BJ (cell line): ENCODE measurements at regions of chr10 and their contacts with region 1.

Region 1: GRCh38 chr10:68826764-68827591 is at the start of gene STOX1:
- DNase-seq: peak; percentile 0
- H3K4me3 ChIP-seq: peak within 1 kb of the TSS; percentile 49
- H3K27me3 ChIP-seq: peaks cover 6% of the 10 kb centered on the region
- CTCF ChIP-seq: no peak; the same call in 1 of the 2 replicates
- polyA plus RNA-seq, gene STOX1: 0.02 TPM in 1 of 2 replicates, not detected in the other

Region 2: DNA sequence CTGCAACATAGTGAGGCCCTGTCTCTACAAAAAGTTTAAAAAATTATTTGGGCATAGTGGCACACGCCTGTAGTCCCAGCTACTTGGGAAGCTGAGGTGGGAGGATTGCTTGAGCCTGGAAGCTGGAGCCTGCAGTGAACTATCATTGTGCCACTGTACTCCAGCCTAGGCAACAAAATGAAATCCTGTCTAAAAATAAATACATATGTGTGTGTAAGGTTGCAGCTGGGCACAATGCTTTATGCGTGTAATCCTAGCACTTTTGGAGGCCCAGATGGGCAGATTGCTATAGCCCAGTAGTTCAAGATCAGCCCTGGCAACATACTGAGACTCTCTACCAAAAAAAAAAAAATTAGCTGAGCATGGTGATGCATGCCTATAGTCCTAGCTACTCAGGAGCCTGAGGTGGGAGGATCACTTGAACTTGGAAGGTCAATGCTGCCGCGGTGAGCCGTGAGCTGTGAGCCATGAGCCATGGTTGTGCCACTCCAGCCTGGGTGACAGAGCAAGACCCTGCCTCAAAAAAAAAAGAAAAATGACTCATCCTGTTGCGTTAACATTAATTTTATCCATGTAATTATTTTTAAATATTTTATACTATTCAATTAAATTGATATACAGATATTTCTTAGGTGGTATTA is 67.6 kb before region 1 on chr10:
- CTCF ChIA-PET with region 1: no interaction called
- POLR2A ChIA-PET with region 1: no interaction called
- DNase-seq: no peak
- H3K4me3 ChIP-seq: no peak overlapping the region
- H3K27me3 ChIP-seq: no peaks in the 10 kb centered on the region
- CTCF ChIP-seq: no peak

Region 3: DNA sequence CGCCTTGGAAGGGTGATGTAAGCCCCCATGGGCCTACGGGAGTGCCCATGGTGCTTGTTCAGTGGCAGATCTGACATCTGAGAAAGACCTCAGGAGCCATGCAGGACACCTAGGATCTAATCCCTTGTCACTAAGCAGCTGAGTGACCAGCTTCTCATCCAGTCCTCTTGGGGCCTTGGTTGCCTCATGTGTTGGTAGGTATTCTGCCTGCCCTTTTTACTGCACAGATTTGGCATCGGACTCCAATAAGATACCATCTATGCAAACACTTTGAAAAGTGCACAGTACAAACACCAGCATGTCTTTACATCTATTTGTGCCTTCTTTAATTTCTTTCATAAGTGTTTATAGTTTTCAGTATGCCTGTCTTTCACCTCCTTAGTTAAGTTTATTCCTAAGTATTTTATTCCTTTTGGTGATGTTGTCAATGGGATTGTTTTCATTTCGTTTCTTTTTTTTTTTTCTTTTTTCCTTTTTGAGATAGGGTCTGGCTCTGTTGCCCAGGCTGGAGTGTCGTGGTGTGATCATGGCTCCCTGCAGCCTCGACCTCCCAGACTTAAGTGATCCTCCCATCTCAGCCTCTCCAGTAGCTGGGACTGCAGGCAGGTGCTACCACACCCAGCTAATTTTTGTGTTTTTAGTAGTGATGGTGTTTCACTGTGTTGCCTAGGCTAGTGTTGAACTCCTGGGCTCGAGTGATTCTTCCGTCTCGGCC is 10.8 kb after region 1 on chr10:
- CTCF ChIA-PET with region 1: interaction called, 10 read pairs
- POLR2A ChIA-PET with region 1: no interaction called
- DNase-seq: no peak
- H3K4me3 ChIP-seq: no peak overlapping the region
- H3K27me3 ChIP-seq: no peaks in the 10 kb centered on the region; the same call in 1 of the 2 replicates
- CTCF ChIP-seq: no peak

Region 4: DNA sequence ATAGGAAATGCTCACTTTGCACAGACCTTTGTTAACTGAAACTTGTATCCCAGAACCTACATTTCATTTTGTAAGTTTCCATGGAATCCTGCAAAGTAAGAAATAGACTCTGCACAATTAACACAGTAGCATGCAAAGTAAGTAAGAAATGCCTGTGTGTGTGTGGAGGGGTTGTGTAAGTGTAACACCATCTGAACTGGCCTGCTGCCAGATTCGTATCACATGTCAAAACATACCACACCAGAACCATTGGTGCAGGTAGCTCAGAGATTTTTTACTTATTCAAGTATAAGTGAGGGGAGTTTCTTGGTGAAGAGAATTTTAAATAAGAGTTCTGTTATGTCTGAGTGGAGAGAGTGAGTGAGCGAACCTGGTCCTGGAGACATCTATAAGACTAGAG is 111.1 kb after region 1 on chr10:
- CTCF ChIA-PET with region 1: no interaction called
- POLR2A ChIA-PET with region 1: no interaction called
- DNase-seq: no peak
- H3K4me3 ChIP-seq: no peak overlapping the region
- H3K27me3 ChIP-seq: no peaks in the 10 kb centered on the region
- CTCF ChIP-seq: no peak